Heart left ventricle (tissue), 16 donors: ENCODE measurements at regions of chr12 and their contacts with region 1.

Region 1: DNA sequence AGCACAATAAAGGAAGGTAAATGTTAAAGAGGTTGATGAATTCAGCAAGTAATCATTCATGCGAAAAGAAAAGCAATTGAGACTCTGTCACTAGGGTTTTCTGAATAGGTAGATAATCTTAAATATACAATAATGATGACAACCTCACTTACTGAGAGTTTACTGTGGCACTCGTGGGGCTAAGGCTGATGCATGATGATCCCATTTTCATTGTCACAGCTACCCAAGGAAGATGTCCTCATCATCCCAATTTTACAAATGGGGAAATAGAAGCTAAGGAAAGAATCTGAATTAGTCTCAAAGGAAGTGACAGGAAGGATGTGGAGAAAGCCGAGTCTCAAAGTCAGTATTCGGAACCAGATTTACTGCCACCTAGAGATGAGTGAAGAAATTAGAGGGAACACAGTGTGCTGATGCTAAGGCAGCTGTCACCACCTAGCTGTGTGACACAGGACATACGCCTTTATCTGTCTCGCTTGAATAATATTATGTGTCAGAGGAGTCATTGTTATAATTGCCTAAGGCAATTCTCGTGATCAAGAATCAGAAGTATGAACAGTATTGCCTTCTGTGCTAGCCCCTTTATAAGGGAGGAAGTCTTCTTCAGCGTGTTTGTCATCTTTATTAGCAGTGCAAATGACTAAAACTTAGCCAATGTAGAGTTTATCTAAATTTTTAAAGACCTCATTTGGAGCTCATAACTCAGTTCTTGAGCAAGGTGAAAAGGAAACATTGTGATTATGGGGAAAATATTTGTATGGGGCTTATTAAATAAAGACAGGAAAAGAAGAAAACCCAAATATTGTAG is 63.2 kb downstream of the ERGIC2 start:
- DNase-seq: peak in 4 of 5 donors; percentile 57 to 73 (median 64)
- ATAC-seq: peak; percentile 97 to 98 (median 98)
- H3K4me3 ChIP-seq: peak overlapping the region in 9 of 12 donors; percentile 4 to 42 (median 30)
- H3K27ac ChIP-seq: peak overlapping the region; percentile 24 to 83 (median 72)
- H3K4me1 ChIP-seq: peaks cover 0 to 32% (median 9%) of the 10 kb centered on the region in 12 donors
- H3K27me3 ChIP-seq: no peaks in the 10 kb centered on the region
- CTCF ChIP-seq: peak; percentile 61 to 96 (median 82)
- POLR2A ChIP-seq: no peak

Region 2: GRCh38 chr12:28603239-28603638 is 714.5 kb before region 1 on chr12:
- intact Hi-C with region 1: no loop called
- DNase-seq: no peak
- ATAC-seq: no peak
- H3K4me3 ChIP-seq: no peak overlapping the region
- H3K27ac ChIP-seq: no peak overlapping the region
- H3K4me1 ChIP-seq: peaks cover 0 to 8% (median 0%) of the 10 kb centered on the region in 12 donors
- H3K27me3 ChIP-seq: no peaks in the 10 kb centered on the region
- CTCF ChIP-seq: no peak
- POLR2A ChIP-seq: no peak

Region 3: GRCh38 chr12:29073628-29074239 is 244.0 kb before region 1 on chr12:
- intact Hi-C with region 1: loop called (anchors 2 to 5 kb)
- DNase-seq: no peak
- ATAC-seq: peak; percentile 55 to 81 (median 69)
- H3K4me3 ChIP-seq: no peak overlapping the region
- H3K27ac ChIP-seq: no peak overlapping the region
- H3K4me1 ChIP-seq: no peaks in the 10 kb centered on the region
- H3K27me3 ChIP-seq: no peaks in the 10 kb centered on the region
- CTCF ChIP-seq: peak; percentile 65 to 84 (median 74)
- POLR2A ChIP-seq: no peak

Region 4: GRCh38 chr12:29088611-29089219 is 229.0 kb before region 1 on chr12:
- intact Hi-C with region 1: loop called in 3 of 10 experiments (anchors 5 kb)
- DNase-seq: no peak
- ATAC-seq: no peak
- H3K4me3 ChIP-seq: no peak overlapping the region
- H3K27ac ChIP-seq: no peak overlapping the region
- H3K4me1 ChIP-seq: no peaks in the 10 kb centered on the region
- H3K27me3 ChIP-seq: no peaks in the 10 kb centered on the region
- CTCF ChIP-seq: peak in 9 of 12 donors; percentile 22 to 44 (median 41)
- POLR2A ChIP-seq: no peak

Region 5: GRCh38 chr12:29149691-29150281 is 168.0 kb before region 1 on chr12:
- intact Hi-C with region 1: loop called in 1 of 10 experiments (anchors 10 kb)
- DNase-seq: peak in 3 of 5 donors; percentile 22 to 65 (median 30)
- ATAC-seq: peak in 2 of 4 donors; percentile 24 to 31
- H3K4me3 ChIP-seq: peak overlapping the region; percentile 53 to 91 (median 79)
- H3K27ac ChIP-seq: peak overlapping the region; percentile 33 to 91 (median 79)
- H3K4me1 ChIP-seq: peaks cover 0 to 56% (median 21%) of the 10 kb centered on the region in 12 donors
- H3K27me3 ChIP-seq: no peaks in the 10 kb centered on the region
- CTCF ChIP-seq: no peak
- POLR2A ChIP-seq: no peak